Sciatic nerve (tissue), 2 donors: ENCODE measurements at regions of chr12 and their contacts with region 1.

Region 1: GRCh38 chr12:15220994-15221885 is at the start of gene RERG:
- DNase-seq: peak; percentile 91
- ATAC-seq: peak; percentile 99
- total RNA-seq, gene RERG: 21.9 TPM

Region 2: DNA sequence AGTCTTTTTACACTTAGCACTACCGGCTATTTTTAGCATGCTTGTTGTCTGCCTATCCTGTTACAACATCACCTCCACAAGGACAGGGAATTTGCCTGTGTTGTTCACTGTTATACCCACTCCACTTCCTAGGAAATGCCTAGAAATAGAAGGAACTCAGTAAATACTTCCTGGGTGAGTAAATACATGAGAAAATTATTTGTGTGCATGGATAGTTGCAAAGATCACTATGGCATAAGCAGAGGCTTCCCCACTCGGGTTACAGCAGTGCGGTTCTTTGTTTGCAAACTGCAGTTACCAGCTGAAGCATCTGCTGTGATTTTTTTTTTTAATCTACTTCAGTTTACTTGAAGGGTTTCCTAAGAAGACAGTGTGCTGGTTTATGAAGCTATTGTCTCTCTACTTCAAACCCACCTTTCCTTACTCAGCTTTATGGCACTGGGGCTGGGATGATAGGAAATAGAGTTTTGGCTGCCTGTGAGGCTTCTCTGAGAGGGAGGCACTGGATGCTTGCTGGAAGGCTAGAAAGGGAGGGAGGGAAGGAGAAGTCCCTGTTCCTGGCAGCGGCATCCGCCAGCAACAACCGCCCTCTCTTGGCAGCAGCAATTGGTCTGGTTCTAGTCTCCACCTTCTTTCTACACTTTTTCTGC is 219.4 kb before region 1 on chr12:
- intact Hi-C with region 1: loop called (anchors 5 kb)
- DNase-seq: peak; percentile 56
- ATAC-seq: peak; percentile 87

Region 3: DNA sequence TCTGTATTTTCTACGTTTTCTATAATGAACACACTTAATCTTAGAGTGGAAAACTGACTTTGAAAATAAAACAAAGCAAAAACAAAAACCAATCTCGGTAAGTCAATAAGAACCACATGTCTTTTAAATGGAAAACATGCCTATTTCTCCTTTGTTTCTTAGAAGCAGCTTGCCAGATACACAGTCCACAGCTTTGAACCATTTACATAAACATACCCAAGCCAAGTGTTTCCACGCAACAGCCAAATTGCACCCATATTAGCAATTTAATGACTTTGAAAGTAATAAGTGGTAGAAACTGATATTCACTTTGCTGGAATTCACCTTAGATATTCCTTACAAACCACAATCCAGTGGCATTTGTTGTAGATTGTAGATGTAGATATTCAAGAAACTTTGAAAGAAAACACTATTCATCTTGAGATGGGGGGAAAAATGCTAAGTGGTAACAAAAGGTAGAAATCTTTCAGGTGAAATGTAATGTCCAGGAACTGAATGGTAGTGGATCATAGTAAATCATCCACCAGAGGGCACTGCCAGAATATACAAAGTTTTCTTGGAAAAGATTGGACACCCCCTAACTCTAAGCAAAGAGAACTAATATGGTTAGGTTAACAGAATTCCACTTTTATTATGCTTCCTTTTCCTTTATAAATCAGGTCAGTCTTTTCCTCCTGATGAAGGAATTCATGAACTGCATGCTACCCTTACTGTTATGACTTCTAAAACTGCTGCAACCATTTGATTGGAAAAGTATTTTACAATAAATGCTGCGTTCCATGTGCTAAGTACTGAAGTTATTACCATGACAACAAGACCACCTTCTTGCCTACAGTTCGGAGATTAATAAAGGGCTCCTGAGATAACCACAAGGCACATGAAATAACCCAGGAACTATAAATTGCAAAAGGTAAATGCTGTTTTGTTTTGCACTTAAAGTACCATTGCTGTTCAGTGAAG is 69.8 kb before region 1 on chr12:
- intact Hi-C with region 1: loop called (anchors 5 kb)
- DNase-seq: no peak
- ATAC-seq: peak; percentile 85